Naive thymus-derived CD4-positive, alpha-beta T cell (primary cell): ENCODE measurements at regions of chr1 and their contacts with region 1.

Region 1: GRCh38 chr1:103461161-103462105 is 64.1 kb upstream of the RNPC3 start:
- DNase-seq: no peak
- ATAC-seq: no peak
- H3K4me3 ChIP-seq: no peak overlapping the region
- H3K4me3 Mint-ChIP-seq: no peak overlapping the region
- H3K27ac ChIP-seq: no peak overlapping the region
- H3K27ac Mint-ChIP-seq: no peak overlapping the region
- H3K4me1 ChIP-seq: no peaks in the 10 kb centered on the region
- H3K4me1 Mint-ChIP-seq: no peaks in the 10 kb centered on the region
- H3K27me3 ChIP-seq: no peaks in the 10 kb centered on the region
- H3K27me3 Mint-ChIP-seq: peaks cover 0 to 6% (median 3%) of the 10 kb centered on the region in 5 donors

Region 2: GRCh38 chr1:101506541-101507164 is 1954.8 kb before region 1 on chr1:
- CTCF ChIA-PET with region 1: interaction called, 3 read pairs
- POLR2A ChIA-PET with region 1: no interaction called
- intact Hi-C with region 1: loop called in 1 of 2 experiments (anchors 5 kb)
- DNase-seq: peak in 6 of 9 donors; percentile 8 to 56 (median 44)
- ATAC-seq: peak; percentile 73
- H3K4me3 ChIP-seq: no peak overlapping the region
- H3K4me3 Mint-ChIP-seq: no peak overlapping the region
- H3K27ac ChIP-seq: no peak overlapping the region
- H3K27ac Mint-ChIP-seq: no peak overlapping the region
- H3K4me1 ChIP-seq: no peaks in the 10 kb centered on the region
- H3K4me1 Mint-ChIP-seq: peaks cover 0 to 1% (median 0%) of the 10 kb centered on the region in 7 donors
- H3K27me3 ChIP-seq: no peaks in the 10 kb centered on the region
- H3K27me3 Mint-ChIP-seq: peaks cover 0 to 28% (median 0%) of the 10 kb centered on the region in 5 donors

Region 3: GRCh38 chr1:101520302-101520701 is 1941.1 kb before region 1 on chr1:
- CTCF ChIA-PET with region 1: interaction called, 3 read pairs
- POLR2A ChIA-PET with region 1: no interaction called
- intact Hi-C with region 1: loop called in 1 of 2 experiments (anchors 2 kb)
- DNase-seq: peak in 4 of 9 donors; percentile 4 to 14 (median 12)
- ATAC-seq: peak; percentile 38
- H3K4me3 ChIP-seq: no peak overlapping the region
- H3K4me3 Mint-ChIP-seq: no peak overlapping the region
- H3K27ac ChIP-seq: no peak overlapping the region
- H3K27ac Mint-ChIP-seq: no peak overlapping the region
- H3K4me1 ChIP-seq: no peaks in the 10 kb centered on the region
- H3K4me1 Mint-ChIP-seq: peaks cover 0 to 8% (median 4%) of the 10 kb centered on the region in 7 donors
- H3K27me3 ChIP-seq: no peaks in the 10 kb centered on the region
- H3K27me3 Mint-ChIP-seq: peaks cover 4 to 19% (median 7%) of the 10 kb centered on the region in 5 donors

Region 4: GRCh38 chr1:101769520-101769919 is 1691.9 kb before region 1 on chr1:
- CTCF ChIA-PET with region 1: no interaction called
- POLR2A ChIA-PET with region 1: no interaction called
- intact Hi-C with region 1: loop called in 1 of 2 experiments (anchors 5 kb)
- DNase-seq: no peak
- ATAC-seq: no peak
- H3K4me3 ChIP-seq: no peak overlapping the region
- H3K4me3 Mint-ChIP-seq: no peak overlapping the region
- H3K27ac ChIP-seq: no peak overlapping the region
- H3K27ac Mint-ChIP-seq: no peak overlapping the region
- H3K4me1 ChIP-seq: no peaks in the 10 kb centered on the region
- H3K4me1 Mint-ChIP-seq: no peaks in the 10 kb centered on the region
- H3K27me3 ChIP-seq: no peaks in the 10 kb centered on the region
- H3K27me3 Mint-ChIP-seq: peaks cover 0 to 8% (median 7%) of the 10 kb centered on the region in 5 donors

Region 5: DNA sequence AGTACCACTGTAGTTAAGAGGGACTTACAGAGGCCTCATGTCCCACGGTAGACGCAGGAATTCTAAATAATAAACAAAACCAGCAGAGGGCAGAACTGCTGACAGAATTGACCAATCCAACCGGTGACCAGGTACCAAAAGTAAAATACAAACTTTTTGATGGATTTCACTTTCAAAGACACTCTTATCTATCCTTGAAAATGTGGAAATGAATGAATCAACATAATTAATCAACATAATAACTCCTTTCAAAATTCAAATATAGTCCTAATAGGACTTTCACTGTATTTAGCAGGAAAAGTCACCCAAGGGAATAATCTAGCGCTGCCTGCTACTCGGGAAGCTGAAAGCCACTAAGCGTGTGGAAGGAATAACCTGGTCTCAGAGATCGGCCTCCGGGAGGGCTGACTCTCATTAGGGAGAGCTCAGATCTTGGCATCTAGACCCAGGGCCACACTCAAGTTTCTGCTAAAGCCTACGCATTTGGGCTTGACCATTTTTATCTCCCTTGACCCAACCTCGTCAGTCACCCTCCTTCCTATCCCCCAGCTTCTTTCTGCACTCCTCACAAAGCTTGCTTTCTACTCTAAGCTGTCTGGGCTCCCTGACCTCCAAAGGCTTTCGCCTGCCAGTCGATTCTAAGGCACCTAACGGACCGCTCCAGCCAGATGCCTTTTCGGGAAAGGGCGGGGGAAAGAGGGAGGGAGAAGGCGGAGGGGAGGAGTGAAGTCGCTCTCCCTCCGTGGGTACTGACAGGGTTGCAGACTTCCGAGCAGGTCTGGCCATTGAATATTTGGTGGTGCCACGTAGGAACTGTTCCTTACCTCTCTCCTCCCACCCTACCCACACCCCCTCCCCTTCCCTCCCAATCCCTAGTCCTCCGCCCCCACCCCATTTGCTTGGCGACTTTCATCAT is 354.7 kb before region 1 on chr1:
- CTCF ChIA-PET with region 1: interaction called, 4 read pairs
- POLR2A ChIA-PET with region 1: no interaction called
- intact Hi-C with region 1: loop called (anchors 1 to 5 kb)
- DNase-seq: no peak
- ATAC-seq: no peak
- H3K4me3 ChIP-seq: no peak overlapping the region
- H3K4me3 Mint-ChIP-seq: peak overlapping the region in 6 of 10 donors; percentile 4 to 43 (median 26)
- H3K27ac ChIP-seq: no peak overlapping the region
- H3K27ac Mint-ChIP-seq: no peak overlapping the region
- H3K4me1 ChIP-seq: no peaks in the 10 kb centered on the region
- H3K4me1 Mint-ChIP-seq: peaks cover 0 to 15% (median 7%) of the 10 kb centered on the region in 7 donors
- H3K27me3 ChIP-seq: no peaks in the 10 kb centered on the region
- H3K27me3 Mint-ChIP-seq: peaks cover 26 to 36% (median 31%) of the 10 kb centered on the region in 5 donors